Activated CD4-positive, alpha-beta memory T cell treated with anti-CD3 and anti-CD28 coated beads, Interleukin-2, amount 10 ng/mL, durations not matched to agents 7 days and 5 days (primary cell): ENCODE measurements at regions of chr11 and their contacts with region 1.

Region 1: DNA sequence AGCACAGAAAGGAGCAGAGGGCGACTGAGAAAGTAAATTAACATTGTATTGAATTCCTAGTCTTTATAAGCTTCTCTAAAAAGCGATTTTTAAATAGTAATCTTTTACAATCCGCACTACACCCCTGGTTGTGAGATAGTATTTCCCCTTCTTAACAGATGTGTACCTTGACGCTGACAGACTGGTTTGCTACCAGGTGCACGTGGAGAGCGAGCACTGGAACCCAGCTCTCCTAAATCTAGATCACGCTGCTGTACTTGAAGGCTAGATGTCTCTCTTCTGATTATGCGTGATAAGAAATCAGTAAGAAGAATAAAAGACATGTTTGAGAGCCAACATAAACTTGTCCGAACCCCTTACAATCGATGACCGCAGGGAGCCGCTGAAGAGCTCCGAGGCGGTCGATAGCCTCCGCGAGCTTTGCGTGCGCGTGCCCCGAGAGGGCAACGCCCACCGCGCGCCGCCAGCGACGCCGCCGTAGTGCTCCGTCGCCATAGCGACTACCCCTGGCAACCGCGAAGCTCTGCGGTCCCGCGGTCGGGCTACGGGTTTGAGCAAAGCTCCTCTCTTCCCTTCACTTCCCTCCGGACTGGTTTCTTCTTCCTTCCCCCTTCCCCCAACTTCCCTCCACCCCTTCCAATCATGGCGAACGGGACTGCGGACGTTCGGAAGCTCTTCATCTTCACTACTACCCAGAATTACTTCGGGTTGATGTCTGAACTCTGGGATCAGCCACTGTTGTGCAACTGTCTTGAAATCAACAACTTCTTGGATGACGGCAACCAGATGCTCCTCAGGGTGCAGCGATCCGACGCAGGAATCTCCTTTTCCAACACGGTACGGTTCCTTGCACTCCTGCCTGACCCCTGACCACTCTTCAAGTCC is at the start of gene DYNC2H1:
- DNase-seq: peak; percentile 92
- H3K4me3 Mint-ChIP-seq: peak within 1 kb of the TSS; percentile 90
- H3K27ac Mint-ChIP-seq: peak within 1 kb of the TSS; percentile 71
- H3K4me1 Mint-ChIP-seq: peaks cover 14% of the 10 kb centered on the region
- H3K27me3 Mint-ChIP-seq: peaks cover 6% of the 10 kb centered on the region
- total RNA-seq, gene DYNC2H1: 3.0 to 3.1 TPM

Region 2: GRCh38 chr11:103091801-103092524 is 17.2 kb before region 1 on chr11 and contains the start of gene DCUN1D5:
- CTCF ChIA-PET with region 1: interaction called, 35 read pairs
- POLR2A ChIA-PET with region 1: interaction called, 88 read pairs
- DNase-seq: peak; percentile 96
- H3K4me3 Mint-ChIP-seq: peak within 1 kb of the TSS; percentile 93
- H3K27ac Mint-ChIP-seq: peak within 1 kb of the TSS; percentile 91
- H3K4me1 Mint-ChIP-seq: peaks cover 28% of the 10 kb centered on the region
- H3K27me3 Mint-ChIP-seq: peaks cover 12% of the 10 kb centered on the region
- total RNA-seq, gene DCUN1D5: 28.6 to 32.6 TPM

Region 3: GRCh38 chr11:103097279-103097678 is 11.9 kb before region 1 on chr11:
- CTCF ChIA-PET with region 1: interaction called, 35 read pairs
- POLR2A ChIA-PET with region 1: interaction called, 88 read pairs
- DNase-seq: no peak
- H3K4me3 Mint-ChIP-seq: no peak overlapping the region
- H3K27ac Mint-ChIP-seq: no peak overlapping the region
- H3K4me1 Mint-ChIP-seq: peaks cover 6% of the 10 kb centered on the region
- H3K27me3 Mint-ChIP-seq: peaks cover 29% of the 10 kb centered on the region

Region 4: DNA sequence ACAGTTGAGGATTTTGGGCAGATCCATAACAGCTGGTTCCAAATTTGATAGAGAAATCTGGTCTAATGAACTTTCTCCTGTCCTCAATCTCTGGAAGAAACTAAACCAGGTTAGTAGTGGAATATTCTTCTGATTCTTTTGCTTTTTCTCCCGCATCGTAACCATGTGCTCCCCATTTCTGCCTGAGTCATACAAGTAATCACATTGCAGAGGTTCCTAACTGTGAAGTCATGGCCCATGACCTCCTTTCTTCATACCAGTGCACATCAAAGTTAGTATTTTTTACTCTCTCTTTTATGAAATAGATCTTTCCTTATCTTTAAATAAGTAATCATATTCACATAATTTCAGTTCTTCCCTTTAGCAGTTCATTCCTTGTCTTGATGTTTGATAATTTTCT is 249.1 kb after region 1 on chr11:
- CTCF ChIA-PET with region 1: no interaction called
- POLR2A ChIA-PET with region 1: no interaction called
- DNase-seq: no peak
- H3K4me3 Mint-ChIP-seq: no peak overlapping the region
- H3K27ac Mint-ChIP-seq: no peak overlapping the region
- H3K4me1 Mint-ChIP-seq: no peaks in the 10 kb centered on the region
- H3K27me3 Mint-ChIP-seq: no peaks in the 10 kb centered on the region